K562 (cell line): ENCODE measurements at regions of chr5 and their contacts with region 1.

Region 1: DNA sequence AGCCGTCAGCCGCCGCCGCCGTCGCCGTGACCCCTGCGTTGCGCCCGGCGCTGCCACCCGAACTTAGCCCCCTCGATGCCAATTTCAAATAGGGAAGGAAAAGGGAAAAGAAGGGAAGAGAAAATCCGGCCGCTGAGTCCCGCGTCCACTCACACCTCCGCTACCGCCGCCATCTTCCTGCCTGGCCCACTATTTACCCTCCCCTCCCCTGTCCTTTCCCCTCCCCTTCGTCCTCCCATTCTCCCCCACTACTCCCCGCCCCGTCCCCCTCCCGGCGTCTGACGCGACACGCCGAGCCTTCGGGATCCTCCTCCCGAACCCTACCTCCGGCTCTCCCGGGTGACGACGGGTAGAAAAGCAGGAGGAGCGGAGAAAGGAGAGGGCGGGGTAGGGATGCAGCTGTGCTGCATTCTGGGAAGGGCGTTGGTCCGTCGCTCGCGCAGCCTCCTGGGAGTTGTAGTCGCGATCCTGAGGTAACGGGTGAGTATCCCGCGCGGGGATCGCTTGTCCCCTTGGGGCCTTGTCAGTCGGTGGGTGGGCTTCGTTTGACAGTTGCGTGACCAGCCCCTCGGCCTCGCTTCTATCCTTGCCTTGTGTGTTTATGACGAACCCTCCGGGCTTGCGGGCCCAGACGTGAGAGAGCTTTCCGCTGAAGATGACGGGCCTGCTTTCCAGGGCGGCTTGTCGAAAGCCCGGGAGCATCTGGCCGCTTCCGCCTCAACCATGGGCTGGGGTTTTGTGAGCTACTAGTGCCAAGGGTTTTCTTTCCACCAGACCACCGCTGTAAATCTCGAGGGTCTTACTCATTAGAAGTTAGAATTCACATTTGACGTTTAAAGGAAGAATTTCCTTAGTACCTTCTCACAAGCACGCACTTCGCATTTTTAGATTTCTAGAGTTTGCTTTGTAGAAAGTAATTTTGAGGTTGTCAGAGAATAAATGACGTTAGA is at the starts of genes CERT1 and POLK:
- DNase-seq: peak; percentile 93 to 99 (median 96)
- ATAC-seq: peak; percentile 95
- H3K4me3 ChIP-seq: peak within 1 kb of the TSS; percentile 89
- H3K27ac ChIP-seq: peak within 1 kb of the TSS; percentile 88
- H3K4me1 ChIP-seq: peaks cover 2 to 8% of the 10 kb centered on the region in 2 experiments; a peak in 2 of 5 replicates
- H3K27me3 ChIP-seq: no peaks in the 10 kb centered on the region
- CTCF ChIP-seq: no peak
- EP300 ChIP-seq: no peak
- POLR2A ChIP-seq: peak; percentile 88
- RAD21 ChIP-seq: no peak; a peak in 1 of 4 replicates
- polyA plus RNA-seq, gene CERT1: 3.4 to 5.1 TPM
- polyA plus RNA-seq, gene POLK: 6.1 to 11.4 TPM

Region 2: GRCh38 chr5:75277463-75277862 is 234.2 kb before region 1 on chr5:
- CTCF ChIA-PET with region 1: no interaction called
- POLR2A ChIA-PET with region 1: no interaction called
- in situ Hi-C with region 1: no loop called
- intact Hi-C with region 1: no loop called
- DNase-seq: no peak
- ATAC-seq: no peak
- H3K4me3 ChIP-seq: no peak overlapping the region
- H3K27ac ChIP-seq: no peak overlapping the region
- H3K4me1 ChIP-seq: no peaks in the 10 kb centered on the region
- H3K27me3 ChIP-seq: peaks cover 0 to 2% of the 10 kb centered on the region in 2 experiments; a peak in 3 of 5 replicates
- CTCF ChIP-seq: no peak
- EP300 ChIP-seq: no peak
- POLR2A ChIP-seq: no peak
- RAD21 ChIP-seq: no peak

Region 3: GRCh38 chr5:75566710-75567309 is 55.1 kb after region 1 on chr5:
- CTCF ChIA-PET with region 1: no interaction called
- POLR2A ChIA-PET with region 1: interaction called, 7 read pairs
- in situ Hi-C with region 1: no loop called
- intact Hi-C with region 1: loop called (anchors 5 kb)
- DNase-seq: peak; percentile 64 to 78 (median 68)
- ATAC-seq: peak; percentile 92
- H3K4me3 ChIP-seq: peak overlapping the region; percentile 5; the same call in 1 of the 2 replicates
- H3K27ac ChIP-seq: peak overlapping the region; percentile 79
- H3K4me1 ChIP-seq: peaks cover 9 to 30% of the 10 kb centered on the region in 2 experiments
- H3K27me3 ChIP-seq: no peaks in the 10 kb centered on the region
- CTCF ChIP-seq: no peak
- EP300 ChIP-seq: peak; percentile 70; the same call in 1 of the 2 replicates
- POLR2A ChIP-seq: no peak
- RAD21 ChIP-seq: no peak

Region 4: DNA sequence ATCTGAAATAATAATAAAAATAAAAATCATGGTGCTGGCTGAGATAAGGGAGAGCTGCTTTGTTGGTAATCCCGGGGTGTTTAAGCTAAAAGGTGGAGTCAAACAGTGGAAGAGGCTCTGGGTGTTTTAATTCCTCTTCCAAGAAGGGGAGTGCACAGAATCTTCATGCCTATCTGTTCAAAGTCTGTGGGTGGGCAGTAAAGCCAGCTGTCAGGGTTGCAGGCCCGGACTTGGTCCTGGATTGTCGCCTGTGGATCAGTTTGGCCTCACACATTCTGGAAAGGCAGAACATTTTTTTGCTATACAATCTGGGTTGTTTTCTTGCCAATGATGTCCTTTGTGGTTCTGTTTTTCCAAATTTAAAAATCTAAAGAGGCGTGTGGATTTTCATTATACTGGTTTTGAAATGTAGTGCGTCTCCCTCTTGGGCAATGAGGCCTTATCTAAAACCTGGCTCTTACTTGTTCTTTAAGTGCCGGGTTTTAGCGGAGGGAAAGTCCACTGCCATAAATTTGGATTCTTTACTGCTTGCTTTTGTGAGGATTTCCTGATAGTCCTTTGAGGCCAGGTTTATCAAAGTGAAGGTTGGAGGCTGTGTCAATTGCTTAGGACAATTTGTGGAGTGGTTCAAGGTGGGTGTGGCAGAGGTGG is 105.4 kb after region 1 on chr5:
- CTCF ChIA-PET with region 1: no interaction called
- POLR2A ChIA-PET with region 1: no interaction called
- in situ Hi-C with region 1: no loop called
- intact Hi-C with region 1: loop called (anchors 5 kb)
- DNase-seq: peak in 3 of 4 experiments; percentile 15 to 65 (median 62)
- ATAC-seq: peak; percentile 64
- H3K4me3 ChIP-seq: no peak overlapping the region
- H3K27ac ChIP-seq: peak overlapping the region; percentile 44; the same call in 1 of the 3 replicates
- H3K4me1 ChIP-seq: peaks cover 13 to 47% of the 10 kb centered on the region in 2 experiments
- H3K27me3 ChIP-seq: no peaks in the 10 kb centered on the region
- CTCF ChIP-seq: no peak
- EP300 ChIP-seq: no peak
- POLR2A ChIP-seq: no peak
- RAD21 ChIP-seq: no peak